ENCODE measurements at regions of chr1 and their contacts with region 1.

Region 1: GRCh38 chr1:84122780-84123382 is 21.2 kb upstream of the PRKACB start:
- DNase-seq: peak; percentile 67
- H3K4me3 ChIP-seq: no peak overlapping the region
- H3K27ac ChIP-seq: no peak overlapping the region
- H3K4me1 ChIP-seq: no peaks in the 10 kb centered on the region
- H3K27me3 ChIP-seq: no peaks in the 10 kb centered on the region
- CTCF ChIP-seq: peak; percentile 42 to 51
- POLR2A ChIP-seq: no peak

Region 2: DNA sequence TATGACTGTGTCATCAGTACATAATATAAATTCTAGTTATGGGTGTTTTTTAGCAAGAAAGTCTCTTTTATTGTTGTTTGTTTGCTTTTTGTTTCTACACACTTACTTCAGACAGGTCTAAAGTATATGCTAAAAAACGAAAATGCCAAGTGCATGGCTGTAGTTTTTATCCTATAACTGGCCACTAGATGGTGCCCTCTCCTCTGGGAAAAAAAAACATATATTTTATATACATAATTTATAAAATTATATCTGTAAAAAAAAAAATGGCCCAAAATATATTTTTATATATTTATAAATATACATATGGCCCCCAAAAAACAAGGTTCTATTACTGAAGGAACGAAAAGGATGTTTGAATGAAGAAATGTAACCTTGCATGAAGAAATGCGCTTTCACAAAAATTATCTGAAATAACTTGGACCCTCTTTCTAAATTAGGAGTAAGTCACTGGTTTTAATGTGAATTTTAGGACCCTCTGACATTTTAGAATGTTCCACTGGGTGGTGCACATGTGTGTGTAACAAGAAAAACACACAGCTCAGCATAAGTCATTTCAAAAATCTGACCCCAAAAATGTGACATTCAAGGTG is 217.5 kb before region 1 on chr1:
- CTCF ChIA-PET with region 1: interaction called, 25 read pairs
- POLR2A ChIA-PET with region 1: no interaction called
- dilution Hi-C with region 1: no loop called
- intact Hi-C with region 1: loop called (anchors 1 kb)
- DNase-seq: peak; percentile 39
- H3K4me3 ChIP-seq: no peak overlapping the region
- H3K27ac ChIP-seq: no peak overlapping the region
- H3K4me1 ChIP-seq: peaks cover 3% of the 10 kb centered on the region
- H3K27me3 ChIP-seq: no peaks in the 10 kb centered on the region
- CTCF ChIP-seq: peak; percentile 21 to 56
- POLR2A ChIP-seq: no peak

Region 3: DNA sequence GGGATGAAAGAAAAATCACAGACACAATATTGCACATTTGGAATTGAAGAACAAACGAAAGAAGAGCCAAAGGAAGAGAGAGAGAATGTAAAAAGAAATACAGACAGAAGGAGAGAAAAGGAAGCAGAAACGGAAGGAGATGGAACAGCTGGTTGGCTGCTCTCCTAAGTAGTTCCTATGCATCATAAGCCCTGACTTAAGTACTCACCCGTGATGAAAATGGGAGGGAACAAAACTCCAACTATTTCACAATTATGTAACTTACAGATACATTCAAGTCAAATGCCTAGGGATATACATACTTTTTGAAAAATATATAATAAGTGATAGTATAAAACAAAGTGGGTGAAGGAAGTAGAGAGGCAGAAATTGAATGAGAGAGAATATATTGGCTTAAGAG is 212.4 kb before region 1 on chr1:
- CTCF ChIA-PET with region 1: interaction called, 25 read pairs
- POLR2A ChIA-PET with region 1: no interaction called
- dilution Hi-C with region 1: no loop called
- intact Hi-C with region 1: loop called (anchors 1 kb)
- DNase-seq: no peak
- H3K4me3 ChIP-seq: no peak overlapping the region
- H3K27ac ChIP-seq: no peak overlapping the region
- H3K4me1 ChIP-seq: no peaks in the 10 kb centered on the region
- H3K27me3 ChIP-seq: no peaks in the 10 kb centered on the region
- CTCF ChIP-seq: no peak
- POLR2A ChIP-seq: no peak

Region 4: GRCh38 chr1:83998498-83999315 is 124.2 kb before region 1 on chr1 and contains the start of gene TTLL7:
- CTCF ChIA-PET with region 1: interaction called, 5 read pairs
- POLR2A ChIA-PET with region 1: no interaction called
- dilution Hi-C with region 1: no loop called
- intact Hi-C with region 1: loop called (anchors 5 kb)
- DNase-seq: peak; percentile 68
- H3K4me3 ChIP-seq: peak within 1 kb of the TSS; percentile 63 to 76 (median 74)
- H3K27ac ChIP-seq: peak within 1 kb of the TSS; percentile 88
- H3K4me1 ChIP-seq: peaks cover 17% of the 10 kb centered on the region
- H3K27me3 ChIP-seq: peaks cover 4 to 5% of the 10 kb centered on the region in 2 experiments
- CTCF ChIP-seq: no peak
- POLR2A ChIP-seq: no peak
- total RNA-seq, gene TTLL7: 4.9 and 11.7 TPM in 2 replicates

Region 5: GRCh38 chr1:84582802-84583587 is 460.1 kb after region 1 on chr1:
- CTCF ChIA-PET with region 1: no interaction called
- POLR2A ChIA-PET with region 1: no interaction called
- dilution Hi-C with region 1: no loop called
- intact Hi-C with region 1: no loop called
- DNase-seq: peak; percentile 68
- H3K4me3 ChIP-seq: no peak overlapping the region
- H3K27ac ChIP-seq: no peak overlapping the region
- H3K4me1 ChIP-seq: no peaks in the 10 kb centered on the region
- H3K27me3 ChIP-seq: no peaks in the 10 kb centered on the region
- CTCF ChIP-seq: no peak
- POLR2A ChIP-seq: no peak